Activated CD8-positive, alpha-beta T cell treated with anti-CD3 and anti-CD28 coated beads for 36 hours (primary cell): ENCODE measurements at regions of chr1 and their contacts with region 1.

Region 1: DNA sequence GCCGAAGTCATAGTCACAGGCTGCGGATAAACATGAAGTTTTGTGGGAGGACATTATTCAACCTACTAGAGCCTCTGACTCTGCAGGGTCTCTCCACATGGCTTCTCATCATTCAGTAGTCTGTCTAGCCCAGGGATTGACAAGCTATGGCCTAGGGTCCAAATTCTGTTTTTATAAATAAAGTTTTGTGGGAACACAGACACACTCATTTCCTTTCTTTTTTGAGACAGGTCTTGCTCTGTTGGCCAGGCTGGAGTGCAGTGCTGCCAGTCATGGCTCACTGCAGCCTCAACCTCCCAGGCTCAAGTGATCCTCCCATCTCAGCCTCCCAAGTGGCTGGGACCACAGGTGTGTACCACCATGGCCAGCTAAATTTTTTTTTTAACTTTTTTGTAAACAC is 8.1 kb upstream of the ENO1 start:
- DNase-seq: no peak
- ATAC-seq: no peak
- H3K4me3 Mint-ChIP-seq: no peak overlapping the region
- H3K27ac Mint-ChIP-seq: no peak overlapping the region
- H3K4me1 Mint-ChIP-seq: no peaks in the 10 kb centered on the region
- H3K27me3 Mint-ChIP-seq: no peaks in the 10 kb centered on the region
- CTCF ChIP-seq: no peak

Region 2: DNA sequence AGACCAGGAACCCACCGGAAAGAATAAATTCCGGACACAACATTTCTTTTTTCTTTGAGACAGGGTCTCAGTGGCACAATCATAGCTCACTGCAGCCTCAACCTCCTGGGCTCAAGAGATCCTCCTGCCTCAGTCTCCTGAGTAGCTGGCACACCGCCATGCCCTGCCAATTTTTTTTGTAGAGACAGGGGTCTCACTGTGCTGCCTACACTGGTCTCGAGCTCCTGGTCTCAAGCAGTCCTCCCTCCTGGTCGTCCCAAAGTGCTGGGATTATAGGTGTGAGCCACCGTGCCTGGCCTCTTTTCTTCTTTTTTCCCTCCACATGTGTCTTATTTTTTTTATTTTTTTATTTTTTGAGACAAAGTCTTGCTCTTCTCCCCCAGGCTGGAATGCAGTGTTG is 12.5 kb after region 1 on chr1:
- CTCF ChIA-PET with region 1: interaction called, 3 read pairs
- POLR2A ChIA-PET with region 1: interaction called, 15 read pairs
- intact Hi-C with region 1: no loop called
- DNase-seq: no peak
- ATAC-seq: no peak
- H3K4me3 Mint-ChIP-seq: peak overlapping the region; percentile 28
- H3K27ac Mint-ChIP-seq: peak overlapping the region; percentile 97
- H3K4me1 Mint-ChIP-seq: peaks cover 49% of the 10 kb centered on the region
- H3K27me3 Mint-ChIP-seq: no peaks in the 10 kb centered on the region
- CTCF ChIP-seq: no peak